IMR-90 (cell line): ENCODE measurements at regions of chr7 and their contacts with region 1.

Region 1: DNA sequence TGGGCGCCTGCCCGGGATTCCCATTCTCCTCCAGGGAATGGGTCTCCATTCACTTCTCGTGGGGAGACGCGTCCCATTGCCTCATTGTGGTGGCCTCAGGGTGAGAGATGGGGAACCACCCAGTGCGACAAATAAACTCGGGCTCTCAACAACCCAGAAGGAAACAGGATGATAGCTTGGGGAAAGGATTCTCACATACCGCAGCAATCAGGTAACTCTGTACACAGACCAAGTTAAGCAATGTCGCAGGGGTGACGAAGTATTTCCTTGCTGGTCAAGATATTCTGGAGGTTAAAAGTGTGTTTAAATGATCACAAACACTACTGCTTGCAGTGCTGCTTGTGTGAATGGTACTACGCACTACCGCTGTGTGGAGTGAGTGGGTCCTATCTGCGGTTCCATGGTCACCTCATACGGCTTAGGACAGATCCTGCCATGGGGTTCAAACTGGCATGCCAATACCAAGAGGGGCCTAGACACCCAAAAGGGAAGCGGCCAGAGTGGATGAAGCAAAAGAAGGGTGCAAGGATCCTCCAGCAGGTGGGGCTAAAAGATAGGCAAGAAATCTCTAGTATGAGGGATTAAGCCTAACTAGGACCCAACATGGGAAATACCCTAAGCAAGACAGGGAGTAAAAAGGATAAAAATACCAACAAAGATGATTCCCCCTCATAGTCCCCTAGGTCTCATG is 143.8 kb upstream of the TMEM106B start:
- DNase-seq: peak; percentile 66
- ATAC-seq: peak; percentile 91
- H3K4me3 ChIP-seq: no peak overlapping the region
- H3K27ac ChIP-seq: no peak overlapping the region
- H3K4me1 ChIP-seq: no peaks in the 10 kb centered on the region
- H3K27me3 ChIP-seq: no peaks in the 10 kb centered on the region
- CTCF ChIP-seq: peak; percentile 74
- POLR2A ChIP-seq: no peak
- RAD21 ChIP-seq: peak; percentile 84

Region 2: DNA sequence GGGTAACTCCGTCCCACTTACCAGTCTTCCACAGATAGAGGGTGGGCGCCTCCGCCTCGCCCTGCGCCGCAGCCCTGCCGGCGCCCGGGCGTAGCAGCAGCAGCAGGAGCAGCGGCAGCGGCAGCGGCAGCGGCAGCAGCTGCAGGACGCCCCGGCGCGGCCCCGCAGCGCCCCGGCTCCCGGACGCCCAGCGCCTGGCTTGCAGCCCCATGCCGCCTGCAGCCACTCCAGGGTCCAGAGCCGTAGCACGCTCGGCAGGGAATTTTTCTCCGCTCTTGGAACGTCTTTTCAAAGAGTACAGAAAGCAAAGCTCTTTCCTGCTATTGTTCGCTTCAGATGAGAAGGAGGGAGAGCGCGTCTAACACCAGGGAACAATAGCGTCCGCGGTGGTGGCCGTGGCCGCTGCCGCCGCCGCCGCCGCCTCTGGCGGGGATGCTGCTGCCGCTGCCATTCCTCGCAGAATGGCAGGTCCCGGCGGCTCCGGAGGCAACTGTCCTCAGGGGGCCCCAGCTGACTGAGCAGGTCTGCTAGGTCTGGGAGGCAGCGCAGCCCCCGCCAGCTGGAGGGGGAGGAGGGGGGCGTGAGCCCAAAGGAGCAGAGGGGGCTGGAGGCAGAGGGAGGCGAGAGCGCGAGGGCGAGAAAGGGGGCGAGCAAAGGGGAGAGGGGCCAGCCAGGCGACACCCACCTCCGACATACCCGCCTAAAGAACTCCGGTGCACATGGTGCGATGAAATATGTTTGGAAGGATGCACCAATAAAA is 235.4 kb before region 1 on chr7 and contains the start of gene THSD7A:
- CTCF ChIA-PET with region 1: no interaction called
- POLR2A ChIA-PET with region 1: no interaction called
- dilution Hi-C with region 1: no loop called
- in situ Hi-C with region 1: no loop called
- intact Hi-C with region 1: loop called (anchors 5 kb)
- DNase-seq: peak; percentile 13
- ATAC-seq: peak; percentile 97
- H3K4me3 ChIP-seq: peak within 1 kb of the TSS; percentile 61
- H3K27ac ChIP-seq: no peak within 1 kb of the TSS
- H3K4me1 ChIP-seq: no peaks in the 10 kb centered on the region
- H3K27me3 ChIP-seq: peaks cover 11% of the 10 kb centered on the region
- CTCF ChIP-seq: no peak
- POLR2A ChIP-seq: no peak
- RAD21 ChIP-seq: no peak
- total RNA-seq, gene THSD7A: under 0.01 and 0.18 TPM in 2 replicates

Region 3: GRCh38 chr7:12092499-12093130 is 25.3 kb after region 1 on chr7:
- CTCF ChIA-PET with region 1: no interaction called
- POLR2A ChIA-PET with region 1: no interaction called
- dilution Hi-C with region 1: no loop called
- in situ Hi-C with region 1: no loop called
- intact Hi-C with region 1: no loop called
- DNase-seq: peak; percentile 4
- ATAC-seq: no peak
- H3K4me3 ChIP-seq: no peak overlapping the region
- H3K27ac ChIP-seq: no peak overlapping the region
- H3K4me1 ChIP-seq: no peaks in the 10 kb centered on the region
- H3K27me3 ChIP-seq: no peaks in the 10 kb centered on the region
- CTCF ChIP-seq: no peak
- POLR2A ChIP-seq: no peak
- RAD21 ChIP-seq: no peak

Region 4: GRCh38 chr7:12244129-12244528 is 176.8 kb after region 1 on chr7:
- CTCF ChIA-PET with region 1: no interaction called
- POLR2A ChIA-PET with region 1: no interaction called
- dilution Hi-C with region 1: no loop called
- in situ Hi-C with region 1: no loop called
- intact Hi-C with region 1: loop called (anchors 5 kb)
- DNase-seq: peak; percentile 8
- ATAC-seq: peak; percentile 48
- H3K4me3 ChIP-seq: no peak overlapping the region
- H3K27ac ChIP-seq: no peak overlapping the region
- H3K4me1 ChIP-seq: no peaks in the 10 kb centered on the region
- H3K27me3 ChIP-seq: no peaks in the 10 kb centered on the region
- CTCF ChIP-seq: 0 out of 2 replicates have a peak, but pooled peaks have one; percentile 11
- POLR2A ChIP-seq: no peak
- RAD21 ChIP-seq: peak; percentile 22; the same call in 1 of the 2 replicates

Region 5: DNA sequence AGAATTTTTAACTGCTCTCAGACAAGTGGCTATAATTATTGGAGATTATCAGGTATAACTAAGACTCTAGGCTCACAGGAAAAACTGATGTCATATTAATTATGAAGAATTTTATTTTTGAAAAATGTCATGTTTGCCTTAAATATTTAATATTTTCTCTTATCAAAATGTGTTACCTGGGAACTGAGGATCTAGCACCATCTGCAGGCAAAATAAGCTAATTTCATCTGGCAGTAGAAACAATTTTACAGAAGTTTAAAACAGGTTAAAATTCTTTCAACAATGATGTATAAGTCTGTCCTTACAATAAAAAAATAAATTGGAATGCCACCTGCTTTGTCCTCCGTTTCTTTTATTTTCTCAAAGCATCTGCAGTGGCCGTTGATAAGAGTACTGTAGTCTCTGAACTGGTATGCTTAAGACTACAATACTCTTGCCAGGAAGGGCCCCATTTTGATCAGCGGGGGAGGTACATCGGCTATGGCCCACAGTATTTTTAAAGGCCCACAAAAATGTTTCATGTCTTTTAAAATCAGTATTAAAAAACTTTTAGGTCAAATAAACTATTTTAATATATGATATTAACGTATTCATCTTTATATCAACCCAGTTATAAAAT is 255.1 kb after region 1 on chr7:
- CTCF ChIA-PET with region 1: interaction called, 6 read pairs
- POLR2A ChIA-PET with region 1: no interaction called
- dilution Hi-C with region 1: no loop called
- in situ Hi-C with region 1: loop called (anchors 5 kb)
- intact Hi-C with region 1: loop called (anchors 1 kb)
- DNase-seq: peak; percentile 38
- ATAC-seq: no peak
- H3K4me3 ChIP-seq: no peak overlapping the region
- H3K27ac ChIP-seq: no peak overlapping the region
- H3K4me1 ChIP-seq: no peaks in the 10 kb centered on the region
- H3K27me3 ChIP-seq: no peaks in the 10 kb centered on the region
- CTCF ChIP-seq: peak; percentile 72
- POLR2A ChIP-seq: no peak
- RAD21 ChIP-seq: peak; percentile 70

Region 6: GRCh38 chr7:12490117-12490688 is 422.9 kb after region 1 on chr7:
- CTCF ChIA-PET with region 1: no interaction called
- POLR2A ChIA-PET with region 1: no interaction called
- dilution Hi-C with region 1: no loop called
- in situ Hi-C with region 1: loop called (anchors 25 kb)
- intact Hi-C with region 1: no loop called
- DNase-seq: peak; percentile 36
- ATAC-seq: peak; percentile 59
- H3K4me3 ChIP-seq: no peak overlapping the region
- H3K27ac ChIP-seq: no peak overlapping the region
- H3K4me1 ChIP-seq: no peaks in the 10 kb centered on the region
- H3K27me3 ChIP-seq: no peaks in the 10 kb centered on the region
- CTCF ChIP-seq: peak; percentile 59
- POLR2A ChIP-seq: no peak
- RAD21 ChIP-seq: peak; percentile 51

Region 7: DNA sequence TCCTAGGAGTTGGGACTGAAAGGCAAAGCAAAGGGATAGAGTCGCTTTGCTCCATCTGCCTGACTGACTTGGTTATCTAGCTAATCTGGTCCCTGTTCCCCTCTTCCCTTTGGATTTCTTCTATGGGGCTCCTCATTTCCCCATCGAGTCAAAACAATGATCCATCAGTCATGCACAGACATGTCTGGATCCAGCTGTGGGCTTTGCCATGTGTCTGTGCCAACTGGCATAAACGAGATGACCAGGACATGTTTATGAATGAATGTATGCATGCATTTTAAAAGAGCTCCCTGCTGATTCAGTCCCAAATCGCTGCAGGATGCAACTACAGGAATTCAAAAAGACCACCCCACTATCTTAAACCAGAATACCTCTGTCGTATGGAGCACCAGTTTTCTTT is 742.2 kb after region 1 on chr7:
- CTCF ChIA-PET with region 1: no interaction called
- POLR2A ChIA-PET with region 1: no interaction called
- dilution Hi-C with region 1: no loop called
- in situ Hi-C with region 1: no loop called
- intact Hi-C with region 1: no loop called
- DNase-seq: no peak
- ATAC-seq: no peak
- H3K4me3 ChIP-seq: no peak overlapping the region
- H3K27ac ChIP-seq: no peak overlapping the region
- H3K4me1 ChIP-seq: no peaks in the 10 kb centered on the region
- H3K27me3 ChIP-seq: no peaks in the 10 kb centered on the region
- CTCF ChIP-seq: no peak
- POLR2A ChIP-seq: no peak
- RAD21 ChIP-seq: no peak